ENCODE measurements at regions of chr20 and their contacts with region 1.

Region 1: GRCh38 chr20:1776681-1777475 is 118.3 kb upstream of the SIRPA start:
- DNase-seq: peak; percentile 79
- ATAC-seq: peak; percentile 90
- H3K4me3 ChIP-seq: peak overlapping the region; percentile 79 to 83
- H3K27ac ChIP-seq: peak overlapping the region; percentile 43
- H3K4me1 ChIP-seq: peaks cover 10 to 24% of the 10 kb centered on the region in 2 experiments; a peak in 3 of 4 replicates
- H3K27me3 ChIP-seq: no peaks in the 10 kb centered on the region
- CTCF ChIP-seq: peak; percentile 75 to 81 (median 79)
- POLR2A ChIP-seq: no peak
- RAD21 ChIP-seq: peak; percentile 77

Region 2: GRCh38 chr20:688809-689212 is 1088.1 kb before region 1 on chr20:
- CTCF ChIA-PET with region 1: no interaction called
- POLR2A ChIA-PET with region 1: no interaction called
- RAD21 ChIA-PET with region 1: no interaction called
- intact Hi-C with region 1: no loop called
- DNase-seq: no peak
- ATAC-seq: peak; percentile 54; the same call in 1 of the 2 replicates
- H3K4me3 ChIP-seq: no peak overlapping the region
- H3K27ac ChIP-seq: no peak overlapping the region
- H3K4me1 ChIP-seq: no peaks in the 10 kb centered on the region
- H3K27me3 ChIP-seq: no peaks in the 10 kb centered on the region; the same call in 1 of the 2 replicates
- CTCF ChIP-seq: no peak
- POLR2A ChIP-seq: no peak
- RAD21 ChIP-seq: no peak

Region 3: DNA sequence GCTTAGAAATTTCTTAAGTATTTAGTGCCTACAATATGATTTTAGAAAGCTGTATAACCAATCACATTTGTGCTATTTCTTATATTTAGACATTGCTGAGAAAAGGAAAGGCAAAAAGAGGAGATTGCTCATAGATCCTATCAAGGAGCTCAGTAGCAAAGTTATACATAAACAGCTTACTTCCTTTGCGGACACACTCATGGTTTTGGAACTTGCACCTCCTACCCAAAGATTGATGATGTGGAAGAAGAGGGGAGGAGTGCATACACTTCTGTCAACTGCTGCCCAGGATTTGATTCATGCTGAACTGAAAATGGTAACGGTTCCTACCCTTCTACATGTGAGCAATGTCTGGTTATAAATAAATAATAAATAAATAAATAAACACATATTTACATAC is 534.3 kb before region 1 on chr20:
- CTCF ChIA-PET with region 1: no interaction called
- POLR2A ChIA-PET with region 1: no interaction called
- RAD21 ChIA-PET with region 1: no interaction called
- intact Hi-C with region 1: no loop called
- DNase-seq: no peak
- ATAC-seq: no peak
- H3K4me3 ChIP-seq: no peak overlapping the region
- H3K27ac ChIP-seq: no peak overlapping the region
- H3K4me1 ChIP-seq: no peaks in the 10 kb centered on the region
- H3K27me3 ChIP-seq: no peaks in the 10 kb centered on the region
- CTCF ChIP-seq: no peak
- POLR2A ChIP-seq: no peak
- RAD21 ChIP-seq: no peak

Region 4: GRCh38 chr20:1474825-1475603 is 301.9 kb before region 1 on chr20:
- CTCF ChIA-PET with region 1: interaction called, 10 read pairs
- POLR2A ChIA-PET with region 1: no interaction called
- RAD21 ChIA-PET with region 1: no interaction called
- intact Hi-C with region 1: loop called (anchors 5 kb)
- DNase-seq: no peak
- ATAC-seq: peak; percentile 67
- H3K4me3 ChIP-seq: no peak overlapping the region
- H3K27ac ChIP-seq: no peak overlapping the region
- H3K4me1 ChIP-seq: peaks cover 5 to 39% of the 10 kb centered on the region in 2 experiments; a peak in 3 of 4 replicates
- H3K27me3 ChIP-seq: no peaks in the 10 kb centered on the region
- CTCF ChIP-seq: peak; percentile 57 to 95 (median 60)
- POLR2A ChIP-seq: no peak
- RAD21 ChIP-seq: peak; percentile 83

Region 5: DNA sequence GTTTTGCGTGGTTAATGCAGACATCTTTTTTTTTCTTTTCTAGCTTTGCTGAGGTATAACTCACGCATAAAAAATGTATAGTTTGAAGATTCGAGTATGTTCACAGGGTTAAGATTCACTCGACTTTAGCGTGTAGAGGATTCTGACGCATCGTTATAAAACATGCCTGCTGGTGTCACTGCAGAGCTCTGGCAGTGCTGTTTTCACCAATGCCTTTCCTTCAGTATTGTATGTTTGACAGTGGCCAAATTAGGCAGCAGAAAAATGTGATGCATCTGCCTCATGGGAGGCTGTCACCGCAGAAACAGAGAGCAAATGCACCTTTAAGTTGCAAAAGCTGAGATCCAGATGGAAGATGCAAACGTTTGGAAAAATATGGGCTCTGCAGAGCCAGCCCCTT is 267.6 kb before region 1 on chr20:
- CTCF ChIA-PET with region 1: interaction called, 14 read pairs
- POLR2A ChIA-PET with region 1: no interaction called
- RAD21 ChIA-PET with region 1: no interaction called
- intact Hi-C with region 1: no loop called
- DNase-seq: peak; percentile 16
- ATAC-seq: peak; percentile 93
- H3K4me3 ChIP-seq: no peak overlapping the region
- H3K27ac ChIP-seq: no peak overlapping the region
- H3K4me1 ChIP-seq: no peaks in the 10 kb centered on the region
- H3K27me3 ChIP-seq: no peaks in the 10 kb centered on the region
- CTCF ChIP-seq: peak; percentile 41 to 62 (median 47); a peak in 5 of 6 replicates
- POLR2A ChIP-seq: no peak
- RAD21 ChIP-seq: peak; percentile 73

Region 6: DNA sequence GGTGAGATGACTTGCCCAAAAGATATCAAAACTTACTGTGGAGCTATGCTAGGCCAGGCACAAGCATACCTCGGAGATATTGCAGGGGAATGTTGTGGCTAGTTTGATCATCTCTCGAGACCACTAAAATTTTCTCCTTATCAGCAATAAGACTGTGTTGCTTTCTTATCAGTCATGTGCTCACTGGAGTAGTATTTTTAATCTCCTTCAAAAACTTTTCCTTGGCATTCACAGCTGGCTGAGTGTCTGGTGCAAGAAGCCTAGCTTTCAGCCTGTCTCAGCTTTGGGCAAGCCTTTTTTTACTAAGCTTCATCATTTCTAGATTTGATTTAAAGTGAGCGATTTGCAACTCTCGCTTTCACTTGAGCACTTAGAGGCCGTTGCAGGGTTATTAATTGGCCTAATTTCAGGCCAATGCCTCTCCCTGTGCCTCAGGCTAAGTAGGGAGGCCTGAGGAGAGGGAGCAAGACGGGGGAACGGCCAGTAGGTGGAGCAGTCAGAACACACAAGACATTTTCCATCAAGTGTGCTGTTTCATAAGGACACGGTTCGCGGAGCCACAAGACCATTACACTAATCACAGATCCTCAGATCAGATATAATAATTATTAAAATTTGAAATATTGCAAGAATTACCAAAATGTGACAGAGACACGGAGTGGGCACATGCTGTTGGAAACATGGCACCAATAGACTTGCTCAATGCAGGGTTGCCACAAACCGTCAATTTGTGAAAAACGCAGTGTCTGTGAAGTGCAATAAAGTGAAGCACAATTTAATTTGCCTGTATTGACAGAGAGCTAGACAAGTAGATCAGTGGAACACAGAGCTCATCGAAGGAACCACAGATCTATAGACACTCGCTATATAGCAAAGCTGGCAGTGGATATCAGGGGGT is 12.5 kb before region 1 on chr20:
- CTCF ChIA-PET with region 1: interaction called, 49 read pairs
- POLR2A ChIA-PET with region 1: interaction called, 4 read pairs
- RAD21 ChIA-PET with region 1: interaction called in 1 of 2 experiments, 3 read pairs
- intact Hi-C with region 1: no loop called
- DNase-seq: peak; percentile 78
- ATAC-seq: peak; percentile 97
- H3K4me3 ChIP-seq: no peak overlapping the region
- H3K27ac ChIP-seq: no peak overlapping the region
- H3K4me1 ChIP-seq: peaks cover 0 to 19% of the 10 kb centered on the region in 2 experiments; a peak in 2 of 4 replicates
- H3K27me3 ChIP-seq: no peaks in the 10 kb centered on the region
- CTCF ChIP-seq: peak; percentile 63 to 89 (median 79); a peak in 5 of 6 replicates
- POLR2A ChIP-seq: no peak
- RAD21 ChIP-seq: peak; percentile 79

Region 7: GRCh38 chr20:2446845-2447244 is 670.0 kb after region 1 on chr20:
- CTCF ChIA-PET with region 1: no interaction called
- POLR2A ChIA-PET with region 1: no interaction called
- RAD21 ChIA-PET with region 1: no interaction called
- intact Hi-C with region 1: no loop called
- DNase-seq: no peak
- ATAC-seq: no peak
- H3K4me3 ChIP-seq: no peak overlapping the region
- H3K27ac ChIP-seq: no peak overlapping the region
- H3K4me1 ChIP-seq: no peaks in the 10 kb centered on the region
- H3K27me3 ChIP-seq: no peaks in the 10 kb centered on the region
- CTCF ChIP-seq: no peak
- POLR2A ChIP-seq: no peak
- RAD21 ChIP-seq: no peak